ENCODE measurements at regions of chr10 and their contacts with region 1.

Region 1: GRCh38 chr10:95246579-95247051 is 44.2 kb downstream of the PDLIM1 start:
- DNase-seq: peak; percentile 51
- H3K4me3 ChIP-seq: no peak overlapping the region
- H3K27ac ChIP-seq: peak overlapping the region; percentile 78
- H3K4me1 ChIP-seq: peaks cover 37% of the 10 kb centered on the region
- H3K27me3 ChIP-seq: no peaks in the 10 kb centered on the region
- CTCF ChIP-seq: peak; percentile 71 to 77

Region 2: GRCh38 chr10:94344522-94345122 is 902.0 kb before region 1 on chr10:
- CTCF ChIA-PET with region 1: no interaction called
- dilution Hi-C with region 1: no loop called
- in situ Hi-C with region 1: no loop called
- intact Hi-C with region 1: no loop called
- DNase-seq: no peak
- H3K4me3 ChIP-seq: no peak overlapping the region
- H3K27ac ChIP-seq: no peak overlapping the region
- H3K4me1 ChIP-seq: no peaks in the 10 kb centered on the region
- H3K27me3 ChIP-seq: no peaks in the 10 kb centered on the region
- CTCF ChIP-seq: no peak

Region 3: GRCh38 chr10:95133016-95133752 is 113.4 kb before region 1 on chr10:
- CTCF ChIA-PET with region 1: no interaction called
- dilution Hi-C with region 1: no loop called
- in situ Hi-C with region 1: no loop called
- intact Hi-C with region 1: loop called (anchors 1 kb)
- DNase-seq: peak; percentile 64
- H3K4me3 ChIP-seq: no peak overlapping the region
- H3K27ac ChIP-seq: no peak overlapping the region
- H3K4me1 ChIP-seq: no peaks in the 10 kb centered on the region
- H3K27me3 ChIP-seq: no peaks in the 10 kb centered on the region
- CTCF ChIP-seq: peak; percentile 84

Region 4: GRCh38 chr10:95201736-95202135 is 44.9 kb before region 1 on chr10:
- CTCF ChIA-PET with region 1: interaction called, 8 read pairs
- dilution Hi-C with region 1: no loop called
- in situ Hi-C with region 1: loop called (anchors 5 kb)
- intact Hi-C with region 1: loop called (anchors 1 kb)
- DNase-seq: peak; percentile 89
- H3K4me3 ChIP-seq: no peak overlapping the region
- H3K27ac ChIP-seq: no peak overlapping the region
- H3K4me1 ChIP-seq: no peaks in the 10 kb centered on the region
- H3K27me3 ChIP-seq: no peaks in the 10 kb centered on the region
- CTCF ChIP-seq: peak; percentile 78 to 81

Region 5: GRCh38 chr10:95266674-95267095 is 20.1 kb after region 1 on chr10:
- CTCF ChIA-PET with region 1: no interaction called
- dilution Hi-C with region 1: no loop called
- in situ Hi-C with region 1: no loop called
- intact Hi-C with region 1: loop called (anchors 1 kb)
- DNase-seq: peak; percentile 97
- H3K4me3 ChIP-seq: no peak overlapping the region
- H3K27ac ChIP-seq: peak overlapping the region; percentile 99
- H3K4me1 ChIP-seq: peaks cover 50% of the 10 kb centered on the region
- H3K27me3 ChIP-seq: no peaks in the 10 kb centered on the region
- CTCF ChIP-seq: no peak

Region 6: GRCh38 chr10:95289003-95289920 is 42.6 kb after region 1 on chr10:
- CTCF ChIA-PET with region 1: interaction called, 3 read pairs
- dilution Hi-C with region 1: no loop called
- in situ Hi-C with region 1: no loop called
- intact Hi-C with region 1: loop called (anchors 1 kb)
- DNase-seq: peak; percentile 42
- H3K4me3 ChIP-seq: peak overlapping the region; percentile 73 to 97 (median 75)
- H3K27ac ChIP-seq: peak overlapping the region; percentile 83
- H3K4me1 ChIP-seq: peaks cover 42% of the 10 kb centered on the region
- H3K27me3 ChIP-seq: no peaks in the 10 kb centered on the region
- CTCF ChIP-seq: peak; percentile 4 to 36